Naive thymus-derived CD4-positive, alpha-beta T cell (primary cell): ENCODE measurements at regions of chr2 and their contacts with region 1.

Region 1: GRCh38 chr2:27370026-27370815 is at the starts of genes EIF2B4 and SNX17:
- DNase-seq: peak; percentile 96 to 100 (median 99)
- ATAC-seq: peak; percentile 96
- H3K4me3 ChIP-seq: peak within 1 kb of the TSS; percentile 94
- H3K4me3 Mint-ChIP-seq: peak within 1 kb of the TSS; percentile 85 to 100 (median 96)
- H3K27ac ChIP-seq: peak within 1 kb of the TSS; percentile 93
- H3K27ac Mint-ChIP-seq: peak within 1 kb of the TSS; percentile 81 to 99 (median 95)
- H3K4me1 ChIP-seq: peaks cover 29 to 30% of the 10 kb centered on the region in 2 donors
- H3K4me1 Mint-ChIP-seq: peaks cover 29 to 53% (median 46%) of the 10 kb centered on the region in 7 donors
- H3K27me3 ChIP-seq: no peaks in the 10 kb centered on the region
- H3K27me3 Mint-ChIP-seq: no peaks in the 10 kb centered on the region
- total RNA-seq, gene EIF2B4: 36.5 to 56.1 (median 44.1) TPM
- total RNA-seq, gene SNX17: 71.0 to 128 (median 111) TPM

Region 2: GRCh38 chr2:27050281-27050995 is 319.8 kb before region 1 on chr2:
- CTCF ChIA-PET with region 1: no interaction called
- POLR2A ChIA-PET with region 1: interaction called, 3 read pairs
- intact Hi-C with region 1: loop called (anchors 1 kb)
- DNase-seq: peak; percentile 77 to 95 (median 94)
- ATAC-seq: peak; percentile 76
- H3K4me3 ChIP-seq: peak overlapping the region; percentile 99
- H3K4me3 Mint-ChIP-seq: peak overlapping the region; percentile 86 to 100 (median 99)
- H3K27ac ChIP-seq: peak overlapping the region; percentile 84
- H3K27ac Mint-ChIP-seq: peak overlapping the region; percentile 96 to 100 (median 100)
- H3K4me1 ChIP-seq: peaks cover 8 to 15% of the 10 kb centered on the region in 2 donors
- H3K4me1 Mint-ChIP-seq: peaks cover 10 to 34% (median 19%) of the 10 kb centered on the region in 7 donors
- H3K27me3 ChIP-seq: no peaks in the 10 kb centered on the region
- H3K27me3 Mint-ChIP-seq: peaks cover 0 to 8% (median 4%) of the 10 kb centered on the region in 5 donors

Region 3: DNA sequence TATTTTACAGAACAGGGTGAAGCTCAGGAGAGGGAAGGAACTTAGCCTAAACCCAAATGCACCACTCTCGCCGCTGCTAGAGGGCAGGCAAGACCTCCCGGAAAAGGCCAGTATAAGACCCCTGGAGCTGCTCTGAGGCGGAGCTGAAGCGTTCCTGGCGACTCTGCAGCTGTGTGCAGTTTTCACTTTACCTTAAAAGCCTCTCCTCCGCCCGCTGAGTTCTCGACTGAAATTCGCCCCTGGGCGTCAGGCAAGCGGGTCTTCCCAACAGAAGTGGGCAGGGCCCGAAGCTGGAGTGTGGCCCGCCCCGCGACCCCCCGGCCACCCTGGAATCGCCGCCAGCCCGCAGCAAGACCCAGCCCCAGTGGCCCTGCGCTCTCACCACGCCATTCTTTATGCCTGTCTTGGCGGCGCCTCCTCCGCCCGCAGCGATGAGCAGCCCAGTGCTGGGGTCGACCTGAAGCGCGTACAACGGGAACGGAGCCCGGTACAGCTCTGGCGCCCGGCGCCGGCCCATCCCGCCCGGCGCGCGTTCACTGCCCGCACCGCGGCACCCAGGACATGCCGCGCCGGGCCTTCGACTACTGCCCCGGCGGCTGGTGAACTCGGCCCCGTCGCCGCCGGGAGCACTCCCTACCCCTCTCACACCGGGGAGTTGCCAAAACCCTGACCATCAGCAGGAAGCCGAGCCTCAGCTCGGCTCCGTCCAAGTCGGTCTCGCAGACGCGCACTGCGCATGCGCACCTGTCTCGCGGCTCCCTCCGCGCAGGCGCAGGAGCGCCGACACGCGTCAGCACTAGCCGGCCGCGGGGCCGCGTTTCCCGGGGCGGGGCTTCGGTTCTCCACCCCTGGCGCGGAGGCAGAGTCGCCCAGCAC is 236.1 kb before region 1 on chr2 and contains the start of gene PREB:
- CTCF ChIA-PET with region 1: no interaction called
- POLR2A ChIA-PET with region 1: no interaction called
- intact Hi-C with region 1: loop called (anchors 1 kb)
- DNase-seq: peak; percentile 92 to 100 (median 97)
- ATAC-seq: peak; percentile 97
- H3K4me3 ChIP-seq: peak within 1 kb of the TSS; percentile 96
- H3K4me3 Mint-ChIP-seq: peak within 1 kb of the TSS; percentile 88 to 97 (median 92)
- H3K27ac ChIP-seq: peak within 1 kb of the TSS; percentile 97
- H3K27ac Mint-ChIP-seq: peak within 1 kb of the TSS; percentile 88 to 99 (median 97)
- H3K4me1 ChIP-seq: peaks cover 12 to 13% of the 10 kb centered on the region in 2 donors
- H3K4me1 Mint-ChIP-seq: peaks cover 10 to 32% (median 21%) of the 10 kb centered on the region in 7 donors
- H3K27me3 ChIP-seq: no peaks in the 10 kb centered on the region
- H3K27me3 Mint-ChIP-seq: peaks cover 0 to 6% (median 0%) of the 10 kb centered on the region in 5 donors
- total RNA-seq, gene PREB: 25.4 to 72.3 (median 53.2) TPM

Region 4: GRCh38 chr2:27303093-27304025 is 66.9 kb before region 1 on chr2:
- CTCF ChIA-PET with region 1: no interaction called
- POLR2A ChIA-PET with region 1: no interaction called
- intact Hi-C with region 1: loop called in 1 of 2 experiments (anchors 1 kb)
- DNase-seq: peak in 8 of 9 donors; percentile 32 to 62 (median 54)
- ATAC-seq: peak; percentile 76
- H3K4me3 ChIP-seq: peak overlapping the region; percentile 43
- H3K4me3 Mint-ChIP-seq: peak overlapping the region; percentile 67 to 85 (median 80)
- H3K27ac ChIP-seq: peak overlapping the region; percentile 42
- H3K27ac Mint-ChIP-seq: peak overlapping the region in 7 of 9 donors; percentile 18 to 83 (median 54)
- H3K4me1 ChIP-seq: peaks cover 0 to 6% of the 10 kb centered on the region in 2 donors
- H3K4me1 Mint-ChIP-seq: peaks cover 0 to 11% (median 9%) of the 10 kb centered on the region in 7 donors
- H3K27me3 ChIP-seq: peaks cover 0 to 6% of the 10 kb centered on the region in 2 donors
- H3K27me3 Mint-ChIP-seq: peaks cover 13 to 34% (median 19%) of the 10 kb centered on the region in 5 donors

Region 5: DNA sequence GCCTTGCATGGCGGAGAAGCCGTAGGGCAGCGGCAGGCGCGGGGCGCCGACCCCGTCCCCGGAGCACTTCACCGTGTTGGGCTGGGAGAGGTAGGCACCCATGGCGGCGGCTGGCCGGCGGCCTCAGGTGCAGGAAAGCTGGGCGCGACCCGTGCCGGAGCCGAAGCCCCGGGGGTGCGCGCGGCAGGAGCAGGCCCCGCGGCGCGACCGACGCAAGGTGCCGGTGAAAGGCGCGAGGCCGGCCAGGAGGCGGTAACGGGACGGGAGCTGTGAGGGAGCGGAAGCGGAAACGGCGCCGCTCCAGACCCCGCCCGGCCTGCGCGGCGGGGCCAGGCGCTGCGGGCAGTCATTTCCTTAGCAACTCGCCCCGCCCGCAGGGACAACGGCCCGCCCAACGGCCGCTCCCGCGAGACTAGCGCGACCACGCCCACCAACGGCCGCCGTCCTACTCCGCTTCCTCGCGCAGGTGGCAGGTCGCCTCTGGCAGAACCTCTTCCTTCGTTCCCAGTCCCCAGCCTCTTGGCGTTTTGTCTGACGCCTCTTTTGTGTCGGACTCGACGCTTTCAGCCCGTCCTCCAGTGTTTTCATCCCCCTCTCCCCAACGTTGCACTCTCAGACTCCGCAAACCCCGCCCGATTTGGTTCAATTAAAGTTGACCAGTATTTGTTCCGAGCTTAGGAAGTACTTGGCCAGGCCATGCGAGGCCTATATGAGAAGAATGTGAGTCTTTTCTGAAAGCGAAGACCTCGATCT is 39.3 kb after region 1 on chr2 and contains the start of gene PPM1G:
- CTCF ChIA-PET with region 1: no interaction called
- POLR2A ChIA-PET with region 1: interaction called, 18 read pairs
- intact Hi-C with region 1: loop called (anchors 1 kb)
- DNase-seq: peak; percentile 92 to 98 (median 95)
- ATAC-seq: peak; percentile 99
- H3K4me3 ChIP-seq: peak within 1 kb of the TSS; percentile 92
- H3K4me3 Mint-ChIP-seq: peak within 1 kb of the TSS; percentile 87 to 96 (median 92)
- H3K27ac ChIP-seq: peak within 1 kb of the TSS; percentile 89
- H3K27ac Mint-ChIP-seq: peak within 1 kb of the TSS; percentile 89 to 98 (median 95)
- H3K4me1 ChIP-seq: peaks cover 13 to 17% of the 10 kb centered on the region in 2 donors
- H3K4me1 Mint-ChIP-seq: peaks cover 28 to 50% (median 35%) of the 10 kb centered on the region in 7 donors
- H3K27me3 ChIP-seq: no peaks in the 10 kb centered on the region
- H3K27me3 Mint-ChIP-seq: peaks cover 0 to 7% (median 0%) of the 10 kb centered on the region in 5 donors
- total RNA-seq, gene PPM1G: 39.5 to 101 (median 45.1) TPM

Region 6: DNA sequence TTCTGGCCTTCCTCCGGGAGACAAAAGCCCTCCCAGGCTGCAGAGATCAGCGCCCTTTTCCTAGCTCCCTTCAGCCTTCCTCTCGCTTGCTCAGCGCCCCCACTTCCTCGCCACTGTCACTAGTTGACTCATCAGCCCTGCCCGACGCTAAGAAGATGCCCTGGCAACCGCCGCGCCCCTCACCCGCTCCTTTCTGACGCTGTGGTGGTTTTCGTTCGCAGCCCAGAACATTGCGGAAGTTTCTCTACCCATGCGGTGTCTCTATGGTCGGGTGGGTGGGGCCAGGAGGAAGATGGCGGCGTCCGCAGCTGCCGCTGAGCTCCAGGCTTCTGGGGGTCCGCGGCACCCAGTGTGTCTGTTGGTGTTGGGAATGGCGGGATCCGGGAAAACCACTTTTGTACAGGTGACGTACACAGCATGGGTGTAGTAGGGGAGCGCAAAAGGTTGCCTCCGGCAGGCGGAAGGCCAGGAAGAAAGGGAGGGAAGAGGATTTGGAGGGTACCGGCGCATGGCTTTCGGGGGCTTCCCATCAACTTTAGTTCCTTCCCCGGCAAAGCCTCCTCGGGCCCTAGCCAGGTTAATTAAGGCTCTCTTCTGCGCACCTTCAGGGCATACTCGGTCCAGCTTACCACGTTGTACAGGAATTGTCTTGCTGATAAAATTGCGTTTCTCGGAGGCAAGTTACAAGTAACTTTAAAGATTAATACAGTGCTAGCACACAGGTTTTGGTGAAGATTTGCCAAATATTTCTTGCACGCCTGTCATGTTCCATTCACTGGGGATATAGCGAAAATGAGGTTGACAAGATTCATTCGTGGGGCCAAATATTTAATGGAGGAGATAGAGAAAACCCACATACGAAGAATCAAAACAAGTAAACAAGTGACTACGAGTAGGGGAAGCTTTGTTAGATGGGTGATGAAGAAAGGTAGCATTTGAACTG is 258.8 kb after region 1 on chr2 and contains the starts of genes CCDC121 and GPN1:
- CTCF ChIA-PET with region 1: no interaction called
- POLR2A ChIA-PET with region 1: interaction called, 4 read pairs
- intact Hi-C with region 1: loop called (anchors 1 kb)
- DNase-seq: peak; percentile 79 to 96 (median 93)
- ATAC-seq: peak; percentile 99
- H3K4me3 ChIP-seq: peak within 1 kb of the TSS; percentile 92
- H3K4me3 Mint-ChIP-seq: no peak within 1 kb of the TSS
- H3K27ac ChIP-seq: peak within 1 kb of the TSS; percentile 92
- H3K27ac Mint-ChIP-seq: peak within 1 kb of the TSS in 5 of 9 donors; percentile 16 to 72 (median 59)
- H3K4me1 ChIP-seq: peaks cover 11 to 13% of the 10 kb centered on the region in 2 donors
- H3K4me1 Mint-ChIP-seq: peaks cover 1 to 33% (median 22%) of the 10 kb centered on the region in 7 donors
- H3K27me3 ChIP-seq: no peaks in the 10 kb centered on the region
- H3K27me3 Mint-ChIP-seq: no peaks in the 10 kb centered on the region
- total RNA-seq, gene CCDC121: 0.61 to 2.7 (median 1.9) TPM
- total RNA-seq, gene GPN1: 27.8 to 45.5 (median 28.9) TPM